Dendritic cell treated with granulocyte-macrophage colony-stimulating factor and Interleukin-4, amounts not matched to agents 40 ng/mL and 50 ng/mL, for 4 days (primary cell): ENCODE measurements at regions of chr17 and their contacts with region 1.

Region 1: DNA sequence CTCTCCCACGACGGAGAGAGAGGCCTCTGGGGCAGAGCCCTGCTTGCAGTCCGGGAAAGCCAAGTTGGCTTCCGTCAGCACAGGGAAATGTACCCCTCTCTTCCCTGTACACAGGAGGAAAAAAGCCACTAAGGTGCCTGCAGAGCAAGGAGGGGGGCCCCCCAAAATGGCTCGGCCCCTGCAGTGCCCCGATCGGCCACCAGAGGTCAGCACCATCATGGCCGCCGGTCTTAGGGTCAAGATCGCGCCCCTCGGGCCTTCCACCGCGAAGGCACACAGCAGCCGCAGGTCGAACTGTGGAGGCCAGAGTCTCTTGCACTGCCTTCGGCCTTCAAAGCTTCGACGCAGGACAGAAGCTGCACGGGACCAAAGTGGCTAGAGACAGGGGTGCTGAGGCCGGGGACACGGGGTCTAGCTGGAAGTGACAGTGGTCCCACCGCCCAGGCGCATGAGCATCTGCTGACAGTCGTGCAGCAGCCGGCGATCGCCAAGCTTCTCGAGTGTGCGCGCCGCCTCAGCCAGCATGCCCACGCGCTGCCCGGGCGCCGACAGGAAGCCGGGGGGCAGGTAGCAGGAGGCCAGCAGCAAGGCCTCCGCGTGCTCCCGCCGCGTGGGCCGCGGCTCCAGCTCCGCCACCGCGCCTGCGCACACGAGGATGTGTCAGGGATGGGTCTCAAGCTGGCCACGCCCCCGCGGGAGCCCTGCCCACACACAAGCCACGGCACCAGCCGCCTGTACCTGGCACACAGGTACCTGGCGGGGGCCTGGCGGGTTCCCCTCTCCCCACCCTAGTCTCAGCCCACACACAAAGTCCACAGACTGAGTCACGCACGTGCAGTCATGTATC is 24.4 kb downstream of the SREBF1 start:
- H3K4me3 Mint-ChIP-seq: no peak overlapping the region
- H3K27ac Mint-ChIP-seq: no peak overlapping the region
- H3K4me1 Mint-ChIP-seq: peaks cover 13% of the 10 kb centered on the region
- H3K27me3 Mint-ChIP-seq: no peaks in the 10 kb centered on the region

Region 2: DNA sequence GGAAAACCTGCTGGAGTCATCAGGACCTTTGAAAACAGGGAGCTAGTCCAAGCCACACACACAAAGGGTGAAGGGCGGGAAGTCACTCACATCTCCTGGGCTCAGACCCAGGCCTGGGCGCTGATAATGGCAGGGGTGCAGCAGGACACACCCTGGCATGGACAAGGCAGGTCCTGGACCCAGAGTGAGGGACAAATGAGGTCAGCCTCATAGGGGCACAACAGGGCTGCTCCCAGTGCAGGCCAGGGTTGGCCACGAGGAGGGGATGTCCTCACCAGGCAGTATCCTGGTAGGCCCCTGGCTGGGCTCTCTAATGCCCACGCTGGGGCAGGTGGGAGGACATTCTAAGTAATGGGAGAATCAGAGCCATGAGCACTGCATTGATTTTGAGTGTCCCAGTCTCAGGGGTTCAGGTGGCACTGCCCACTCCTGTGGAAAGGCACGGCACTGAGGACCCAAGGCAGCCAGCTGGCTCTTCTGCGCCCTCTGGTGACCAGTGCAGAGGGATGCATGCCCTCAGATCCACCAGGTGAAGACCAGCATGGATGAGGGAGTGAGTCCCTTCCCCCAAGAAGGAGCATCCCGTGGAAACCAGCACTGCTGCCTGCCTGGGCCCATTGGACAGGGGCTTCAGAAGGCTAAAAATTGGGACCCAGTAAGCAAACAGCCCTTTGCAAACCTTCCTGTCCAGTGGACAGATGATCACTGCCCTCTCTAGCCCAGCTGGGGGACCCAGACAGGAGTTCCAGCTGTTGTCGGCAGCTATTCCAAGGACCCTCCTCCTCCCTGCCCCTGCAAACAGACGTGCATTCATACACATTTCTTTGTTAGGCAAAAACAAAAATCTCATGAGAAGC is 47.7 kb after region 1 on chr17:
- intact Hi-C with region 1: loop called (anchors 1 kb)
- H3K4me3 Mint-ChIP-seq: no peak overlapping the region
- H3K27ac Mint-ChIP-seq: no peak overlapping the region
- H3K4me1 Mint-ChIP-seq: peaks cover 16% of the 10 kb centered on the region
- H3K27me3 Mint-ChIP-seq: no peaks in the 10 kb centered on the region